Activated T-helper 2 cell treated with anti-CD3 and anti-CD28 coated beads, Interferon-gamma antibody, Interleukin-2, Interleukin-4, amounts not matched to agents 10 μg/mL and 5 μg/mL and 100 μg/mL, durations not matched to agents 14 hours and 24 hours and 36 hours (primary cell): ENCODE measurements at regions of chr15 and their contacts with region 1.

Region 1: DNA sequence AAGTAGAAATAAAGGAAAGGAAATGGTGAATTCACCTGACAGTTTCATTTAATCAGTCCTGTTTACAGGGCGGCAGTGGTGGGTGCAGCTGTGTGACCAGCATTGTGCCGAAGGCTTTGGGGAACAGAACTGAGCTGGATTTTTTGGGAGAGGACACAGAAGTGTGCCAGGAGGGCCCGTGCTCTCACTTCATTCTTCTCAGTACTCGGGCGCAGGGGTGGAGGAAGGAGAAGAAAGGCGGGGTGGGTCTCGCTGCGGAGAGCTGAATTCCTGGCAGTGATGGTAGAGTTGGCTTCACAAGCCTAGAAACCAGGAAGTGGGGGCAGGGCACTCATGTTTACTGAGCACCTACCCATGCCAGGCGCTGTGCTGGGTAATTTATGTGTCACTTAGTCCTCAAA is 64.6 kb downstream of the CRTC3 start:
- DNase-seq: peak; percentile 74
- H3K4me3 Mint-ChIP-seq: peak overlapping the region; percentile 78
- H3K27ac Mint-ChIP-seq: peak overlapping the region; percentile 99
- H3K4me1 Mint-ChIP-seq: peaks cover 72% of the 10 kb centered on the region
- H3K27me3 Mint-ChIP-seq: no peaks in the 10 kb centered on the region

Region 2: GRCh38 chr15:90362936-90363212 is 231.4 kb before region 1 on chr15:
- intact Hi-C with region 1: no loop called
- DNase-seq: no peak
- H3K4me3 Mint-ChIP-seq: no peak overlapping the region
- H3K27ac Mint-ChIP-seq: peak overlapping the region; percentile 54
- H3K4me1 Mint-ChIP-seq: peaks cover 38% of the 10 kb centered on the region
- H3K27me3 Mint-ChIP-seq: no peaks in the 10 kb centered on the region

Region 3: DNA sequence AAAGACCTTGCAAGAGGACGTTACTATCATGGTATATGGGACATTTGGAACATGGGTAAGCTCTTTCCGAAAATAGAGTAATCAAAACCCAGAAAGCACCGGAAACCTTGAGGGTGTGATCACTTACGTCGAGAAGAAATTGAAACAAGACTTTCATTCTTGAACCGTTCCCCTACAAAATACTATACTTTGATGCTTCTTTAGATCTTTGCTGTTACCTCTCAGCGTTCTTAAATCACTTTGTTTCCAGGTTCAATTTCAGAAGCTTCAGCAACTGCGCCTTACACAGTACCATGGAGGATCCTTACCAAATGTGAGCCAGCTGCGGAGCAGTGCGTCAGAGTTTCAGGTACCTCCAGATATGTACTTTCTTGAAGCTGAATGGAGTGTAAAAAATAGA is 54.5 kb before region 1 on chr15:
- intact Hi-C with region 1: loop called (anchors 2 kb)
- DNase-seq: no peak
- H3K4me3 Mint-ChIP-seq: peak overlapping the region; percentile 73
- H3K27ac Mint-ChIP-seq: peak overlapping the region; percentile 89
- H3K4me1 Mint-ChIP-seq: peaks cover 63% of the 10 kb centered on the region
- H3K27me3 Mint-ChIP-seq: no peaks in the 10 kb centered on the region

Region 4: GRCh38 chr15:90565866-90566265 is 28.4 kb before region 1 on chr15:
- intact Hi-C with region 1: loop called (anchors 1 kb)
- DNase-seq: no peak
- H3K4me3 Mint-ChIP-seq: peak overlapping the region; percentile 59
- H3K27ac Mint-ChIP-seq: peak overlapping the region; percentile 96
- H3K4me1 Mint-ChIP-seq: peaks cover 78% of the 10 kb centered on the region
- H3K27me3 Mint-ChIP-seq: no peaks in the 10 kb centered on the region

Region 5: DNA sequence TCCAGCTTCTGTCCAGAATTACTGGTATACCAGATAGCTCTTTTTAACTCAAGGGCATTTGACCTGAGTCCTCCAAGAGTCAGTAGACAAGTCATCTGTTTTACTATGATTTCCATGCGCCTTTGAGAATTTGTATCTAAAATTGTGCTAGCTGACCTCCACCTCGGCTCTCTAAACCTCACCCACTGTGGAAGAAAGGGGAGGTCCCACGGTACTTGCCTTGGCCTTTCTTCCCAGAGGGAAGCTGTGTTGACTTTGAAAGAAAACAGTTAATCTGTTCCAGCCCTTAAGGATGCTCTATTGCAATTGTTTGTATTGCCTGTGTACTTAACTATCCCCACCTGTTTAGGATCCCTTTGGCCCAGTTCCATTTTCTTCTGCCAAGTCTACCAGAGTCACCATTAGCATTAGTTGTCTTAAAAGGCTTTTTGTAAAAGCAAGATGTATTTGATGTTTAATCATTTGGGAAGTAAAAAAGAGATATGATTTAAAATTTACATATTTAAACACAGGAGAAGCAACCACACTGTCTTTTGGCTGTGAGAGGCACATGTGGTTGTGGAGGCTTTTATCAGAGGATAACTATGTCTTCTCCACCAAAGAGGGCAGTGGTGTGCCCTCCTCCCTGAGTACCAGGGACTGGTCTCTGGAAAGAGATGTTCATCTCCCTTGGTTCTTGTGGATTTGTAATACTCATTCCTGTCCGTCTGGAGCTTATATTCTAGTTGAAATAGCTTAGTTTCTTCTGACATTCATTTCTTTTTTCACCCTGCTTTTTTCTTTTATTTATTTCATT is 24.2 kb after region 1 on chr15:
- intact Hi-C with region 1: loop called (anchors 1 kb)
- DNase-seq: no peak
- H3K4me3 Mint-ChIP-seq: no peak overlapping the region
- H3K27ac Mint-ChIP-seq: peak overlapping the region; percentile 60
- H3K4me1 Mint-ChIP-seq: peaks cover 50% of the 10 kb centered on the region
- H3K27me3 Mint-ChIP-seq: no peaks in the 10 kb centered on the region